ENCODE measurements at regions of chr2 and their contacts with region 1.

Region 1: GRCh38 chr2:229835596-229836283 is 86.1 kb downstream of the TRIP12 start:
- DNase-seq: peak in 3 of 14 experiments; percentile 71 to 79 (median 73)
- ATAC-seq: peak; percentile 87
- H3K4me3 ChIP-seq: no peak overlapping the region
- H3K4me3 Mint-ChIP-seq: peak overlapping the region; percentile 46
- H3K27ac ChIP-seq: no peak overlapping the region
- H3K27ac Mint-ChIP-seq: peak overlapping the region; percentile 72
- H3K4me1 ChIP-seq: peaks cover 21% of the 10 kb centered on the region
- H3K4me1 Mint-ChIP-seq: peaks cover 83% of the 10 kb centered on the region
- H3K27me3 ChIP-seq: no peaks in the 10 kb centered on the region
- H3K27me3 Mint-ChIP-seq: no peaks in the 10 kb centered on the region
- CTCF ChIP-seq: no peak

Region 2: GRCh38 chr2:229852565-229852964 is 16.8 kb after region 1 on chr2:
- CTCF ChIA-PET with region 1: interaction called, 4 read pairs
- POLR2A ChIA-PET with region 1: interaction called, 86 read pairs
- intact Hi-C with region 1: loop called (anchors 2 kb)
- DNase-seq: peak; percentile 23 to 80 (median 56)
- ATAC-seq: peak; percentile 91
- H3K4me3 ChIP-seq: no peak overlapping the region
- H3K4me3 Mint-ChIP-seq: peak overlapping the region; percentile 69
- H3K27ac ChIP-seq: peak overlapping the region; percentile 2 to 19
- H3K27ac Mint-ChIP-seq: peak overlapping the region; percentile 90
- H3K4me1 ChIP-seq: peaks cover 30% of the 10 kb centered on the region
- H3K4me1 Mint-ChIP-seq: peaks cover 87% of the 10 kb centered on the region
- H3K27me3 ChIP-seq: no peaks in the 10 kb centered on the region
- H3K27me3 Mint-ChIP-seq: no peaks in the 10 kb centered on the region
- CTCF ChIP-seq: no peak

Measured in CD4-positive, alpha-beta T cell (primary cell).